Keratinocyte (primary cell): ENCODE measurements at regions of chr2 and their contacts with region 1.

Region 1: DNA sequence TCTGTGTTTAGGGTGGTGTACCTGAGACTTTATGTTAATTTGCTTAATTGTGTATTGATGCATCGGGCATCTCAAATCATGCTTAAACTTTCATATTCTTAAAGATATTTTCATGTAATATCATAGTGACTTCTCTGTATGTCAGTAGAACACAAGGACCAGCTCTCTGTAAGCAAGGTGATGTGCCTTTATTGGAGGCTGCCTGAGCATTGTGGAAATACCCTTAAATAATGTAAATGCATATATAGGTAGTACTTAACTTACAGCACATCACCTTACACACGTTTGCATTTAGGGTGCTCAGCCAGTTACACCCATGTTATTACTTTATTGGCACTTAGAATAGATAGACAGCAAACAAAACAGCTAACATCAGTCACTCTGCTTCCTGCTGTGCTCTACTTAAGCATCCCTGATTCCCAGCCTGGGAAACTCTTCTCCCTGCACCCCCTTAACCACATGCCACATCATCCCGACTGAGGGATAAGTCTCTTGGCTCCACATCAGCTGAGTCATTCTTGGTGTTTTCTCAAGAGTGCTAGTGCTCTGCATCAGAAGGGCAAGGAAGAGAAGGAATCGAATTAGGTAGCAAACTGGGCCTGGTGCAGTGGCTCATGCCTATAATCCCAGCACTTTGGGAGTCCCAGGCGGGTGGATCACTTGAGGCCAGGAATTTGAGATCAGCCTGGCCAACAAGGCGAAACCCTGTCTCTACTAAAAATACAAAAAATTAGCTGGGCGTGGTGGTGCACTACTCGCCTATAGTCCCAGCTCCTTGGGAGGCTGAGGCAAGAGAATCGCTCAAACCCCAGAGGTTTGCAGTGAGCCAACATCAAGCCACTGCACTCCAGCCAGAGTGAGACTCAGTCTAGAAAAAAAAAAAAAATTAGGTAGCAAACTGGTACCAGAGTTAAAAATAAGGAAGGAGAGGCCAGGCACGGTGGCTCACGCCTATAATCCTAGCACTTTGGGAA is 108.7 kb downstream of the MAP3K20 start:
- DNase-seq: peak; percentile 63
- H3K4me3 ChIP-seq: no peak overlapping the region
- H3K27ac ChIP-seq: peak overlapping the region; percentile 57
- H3K4me1 ChIP-seq: peaks cover 19% of the 10 kb centered on the region
- H3K27me3 ChIP-seq: no peaks in the 10 kb centered on the region
- CTCF ChIP-seq: no peak

Region 2: DNA sequence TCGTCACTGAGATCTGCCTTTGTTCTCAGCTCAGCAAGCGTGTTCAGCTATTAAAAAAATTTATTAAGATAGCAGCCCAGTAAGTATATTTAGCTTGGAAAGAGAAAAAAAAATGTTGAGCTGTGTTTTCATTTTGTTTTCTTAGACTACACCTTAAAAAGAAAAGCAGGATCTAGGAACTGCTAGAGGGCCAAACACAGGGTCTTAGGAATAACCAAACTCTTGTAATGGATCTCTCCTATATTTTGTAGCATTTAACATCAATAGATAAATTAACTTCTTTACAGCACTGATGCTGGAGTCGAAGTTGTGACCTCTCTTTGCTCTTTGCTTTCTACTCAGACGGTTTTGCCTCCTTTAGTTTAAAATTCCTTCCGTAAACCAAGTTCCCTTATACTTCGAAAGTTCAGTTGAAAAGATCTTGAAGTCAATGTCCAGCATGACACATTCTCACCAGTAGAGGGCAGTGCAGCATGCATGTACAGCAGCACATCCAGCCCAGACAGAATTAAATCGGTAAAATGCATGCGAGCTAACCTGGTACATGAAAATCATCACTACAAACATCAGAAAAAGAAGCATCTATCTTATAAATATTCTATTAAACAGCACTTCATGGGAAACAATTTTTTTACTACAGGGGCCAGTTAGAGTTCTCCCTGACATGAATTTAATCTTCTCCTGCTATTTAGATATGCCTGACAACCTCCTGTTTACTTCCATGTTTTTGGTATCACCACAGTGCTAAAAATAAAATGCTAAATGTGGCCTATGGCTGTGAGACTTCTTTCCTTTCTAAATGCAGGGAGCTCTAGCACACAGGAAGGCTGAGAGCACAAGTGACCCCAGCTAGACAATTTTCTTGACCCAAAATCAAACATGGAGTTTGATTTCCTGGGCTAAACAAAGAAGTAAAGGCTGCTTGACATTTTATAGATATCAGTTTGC is 156.9 kb before region 1 on chr2:
- dilution Hi-C with region 1: loop called (anchors 25 kb)
- DNase-seq: peak; percentile 73
- H3K4me3 ChIP-seq: no peak overlapping the region
- H3K27ac ChIP-seq: no peak overlapping the region
- H3K4me1 ChIP-seq: peaks cover 11% of the 10 kb centered on the region
- H3K27me3 ChIP-seq: no peaks in the 10 kb centered on the region
- CTCF ChIP-seq: peak; percentile 78 to 97 (median 89)

Region 3: DNA sequence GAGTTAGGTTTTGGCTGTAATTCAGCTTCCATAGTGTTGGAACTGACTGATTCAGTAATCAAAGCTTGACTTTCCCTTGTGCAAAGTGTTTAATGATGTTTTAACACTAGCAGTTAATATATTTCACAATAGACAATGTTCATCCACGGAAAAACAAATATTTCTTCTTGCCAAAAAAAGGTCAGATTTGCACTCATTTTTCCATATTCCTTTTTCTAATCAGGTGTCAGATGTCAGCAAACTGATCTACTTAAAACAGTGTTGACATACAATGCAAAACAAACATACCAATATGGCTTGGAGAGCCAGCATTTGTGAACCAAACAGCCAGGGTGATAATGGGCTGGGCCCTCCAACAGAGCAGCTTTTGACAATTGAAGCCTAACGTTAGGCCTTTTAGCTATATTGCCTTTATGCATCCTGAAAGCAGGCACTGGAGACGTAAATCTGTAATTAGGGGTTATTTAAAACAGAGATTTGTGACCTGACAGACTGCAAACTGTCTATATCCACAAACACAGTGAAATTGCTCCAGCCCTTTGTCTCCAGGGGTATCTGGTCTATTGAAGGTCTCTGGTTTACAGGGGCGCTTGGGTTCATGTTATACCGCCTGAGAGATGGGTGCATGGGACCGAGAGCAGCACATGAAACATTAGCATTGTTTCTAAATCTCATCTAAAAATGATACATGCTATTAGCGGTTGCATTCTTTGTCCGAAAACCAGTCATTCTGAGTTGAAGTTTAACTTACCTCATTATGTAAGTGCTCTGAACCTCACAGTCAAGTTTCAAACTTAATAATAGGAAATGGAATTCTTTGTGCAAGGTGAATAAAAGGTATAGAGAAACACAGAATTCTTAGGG is 163.2 kb after region 1 on chr2:
- dilution Hi-C with region 1: no loop called
- DNase-seq: no peak
- H3K4me3 ChIP-seq: no peak overlapping the region
- H3K27ac ChIP-seq: no peak overlapping the region
- H3K4me1 ChIP-seq: no peaks in the 10 kb centered on the region
- H3K27me3 ChIP-seq: no peaks in the 10 kb centered on the region
- CTCF ChIP-seq: no peak